ENCODE measurements at regions of chr12 and their contacts with region 1.

Region 1: DNA sequence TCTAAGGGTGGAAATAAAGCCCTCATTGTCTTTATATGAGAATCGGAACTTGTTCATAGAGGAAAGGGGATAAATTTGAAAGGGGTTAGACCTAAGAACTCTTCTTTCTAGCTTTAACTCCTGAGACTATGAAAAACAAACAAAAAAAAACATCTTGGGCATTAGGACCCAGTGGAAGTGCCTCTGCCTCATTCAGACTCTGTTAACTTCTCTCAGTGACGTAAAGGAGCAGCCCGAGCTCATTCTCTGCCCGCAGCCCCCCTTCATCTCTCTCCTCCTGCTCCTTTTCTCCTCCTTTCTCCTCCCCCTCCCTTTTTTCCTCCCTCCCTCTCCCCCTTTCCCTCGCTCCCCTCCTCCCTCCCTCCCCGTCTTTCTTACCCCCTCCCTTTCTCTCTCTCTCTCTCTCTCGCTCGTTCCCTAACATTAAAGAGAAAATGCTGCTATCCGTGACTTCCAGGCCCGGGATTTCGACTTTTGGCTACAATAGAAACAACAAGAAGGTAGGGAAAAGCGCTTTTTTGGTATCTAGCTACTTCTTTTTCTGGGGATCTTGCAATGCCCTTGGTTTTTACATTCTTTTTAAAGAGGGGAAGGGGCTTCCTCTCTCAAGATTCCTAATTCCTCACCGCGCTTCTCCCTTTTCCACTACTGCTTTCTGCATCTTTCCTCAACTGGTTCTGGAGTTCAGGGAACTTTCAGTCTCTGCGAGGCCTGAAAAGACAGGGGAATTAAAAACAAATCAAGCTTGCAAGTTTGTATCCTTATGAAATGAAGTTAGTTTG is at the start of gene RBMS2:
- DNase-seq: peak; percentile 83
- H3K4me3 ChIP-seq: peak within 1 kb of the TSS; percentile 82
- H3K27ac ChIP-seq: peak within 1 kb of the TSS; percentile 86
- H3K27me3 ChIP-seq: no peaks in the 10 kb centered on the region
- CTCF ChIP-seq: no peak
- polyA plus RNA-seq, gene RBMS2: 96.4 and 117 TPM in 2 replicates

Region 2: DNA sequence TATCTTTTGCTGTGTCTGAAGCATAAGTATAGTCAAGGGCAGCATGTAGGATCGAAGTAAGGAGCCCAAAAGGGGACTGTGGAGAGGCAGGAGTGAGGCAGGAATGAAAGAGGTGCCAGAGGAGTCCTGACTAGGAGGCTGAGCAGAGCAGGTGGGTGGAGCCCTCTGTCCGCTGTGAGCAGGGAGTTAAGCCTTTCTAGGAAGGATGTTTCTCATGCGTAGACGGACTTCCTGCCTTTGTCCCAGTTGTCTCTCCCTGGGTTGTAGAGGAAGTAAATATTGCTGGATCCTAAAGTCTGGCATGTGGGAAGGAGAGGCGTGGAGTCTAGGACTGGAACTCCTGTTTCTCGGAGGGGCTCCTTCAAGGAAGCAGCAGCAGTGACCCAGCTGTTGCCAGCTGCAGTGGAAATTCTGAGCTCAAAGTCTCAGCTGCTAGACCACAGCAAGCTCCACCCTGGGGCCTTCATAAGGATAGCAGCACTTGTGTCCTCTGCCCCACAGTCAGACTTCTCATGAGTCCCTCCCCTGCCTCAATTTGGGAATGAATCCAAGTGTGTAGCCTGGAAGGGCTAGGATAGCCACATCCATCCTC is 43.8 kb after region 1 on chr12:
- CTCF ChIA-PET with region 1: interaction called, 3 read pairs
- POLR2A ChIA-PET with region 1: interaction called, 11 read pairs
- DNase-seq: peak; percentile 66
- H3K4me3 ChIP-seq: peak overlapping the region; percentile 15
- H3K27ac ChIP-seq: peak overlapping the region; percentile 79
- H3K27me3 ChIP-seq: no peaks in the 10 kb centered on the region
- CTCF ChIP-seq: 0 out of 2 replicates have a peak, but pooled peaks have one; percentile 11

Region 3: GRCh38 chr12:56593909-56594621 is 72.3 kb after region 1 on chr12:
- CTCF ChIA-PET with region 1: interaction called, 12 read pairs
- POLR2A ChIA-PET with region 1: interaction called, 3 read pairs
- DNase-seq: peak; percentile 55
- H3K4me3 ChIP-seq: no peak overlapping the region
- H3K27ac ChIP-seq: peak overlapping the region; percentile 63
- H3K27me3 ChIP-seq: no peaks in the 10 kb centered on the region
- CTCF ChIP-seq: peak; percentile 94

Region 4: DNA sequence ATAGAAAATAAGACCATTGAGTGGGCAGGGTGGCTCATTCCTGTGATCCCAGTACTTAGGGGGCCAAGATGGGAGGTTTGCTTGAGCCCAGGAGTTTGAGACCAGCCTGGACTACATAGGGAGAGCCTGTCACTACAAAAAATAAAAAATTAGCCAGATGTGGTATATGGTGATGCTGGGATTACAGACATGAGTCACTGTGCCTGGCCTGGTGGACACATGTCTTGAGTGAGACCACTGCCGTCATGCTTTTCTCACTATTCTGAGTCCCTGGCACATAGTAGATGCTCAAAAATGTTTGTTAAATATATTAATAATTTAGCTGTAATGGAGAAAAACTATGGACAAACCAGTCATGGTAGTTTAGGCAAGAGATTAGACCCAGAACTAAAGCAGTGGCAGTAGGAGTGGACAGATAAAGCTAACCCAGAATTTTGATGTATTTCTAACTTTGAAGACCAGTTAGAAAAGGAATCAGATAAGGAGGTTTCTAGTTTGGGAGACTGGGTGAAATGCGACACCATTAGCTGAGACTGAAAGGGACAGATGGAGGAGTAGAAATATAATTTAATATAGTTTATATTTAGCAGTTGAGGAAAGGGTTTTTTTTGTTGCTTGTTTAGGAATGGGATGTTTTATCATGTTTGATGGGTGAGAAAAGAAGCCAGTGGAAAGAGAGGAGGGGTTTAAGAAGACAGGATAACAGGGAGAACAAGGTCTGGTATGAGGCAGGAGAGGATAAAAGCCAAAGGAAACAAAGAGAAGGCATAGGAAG is 173.7 kb after region 1 on chr12:
- CTCF ChIA-PET with region 1: no interaction called
- POLR2A ChIA-PET with region 1: no interaction called
- DNase-seq: no peak
- H3K4me3 ChIP-seq: no peak overlapping the region
- H3K27ac ChIP-seq: peak overlapping the region; percentile 31
- H3K27me3 ChIP-seq: no peaks in the 10 kb centered on the region
- CTCF ChIP-seq: no peak